ENCODE measurements at regions of chr17 and their contacts with region 1.

Region 1: DNA sequence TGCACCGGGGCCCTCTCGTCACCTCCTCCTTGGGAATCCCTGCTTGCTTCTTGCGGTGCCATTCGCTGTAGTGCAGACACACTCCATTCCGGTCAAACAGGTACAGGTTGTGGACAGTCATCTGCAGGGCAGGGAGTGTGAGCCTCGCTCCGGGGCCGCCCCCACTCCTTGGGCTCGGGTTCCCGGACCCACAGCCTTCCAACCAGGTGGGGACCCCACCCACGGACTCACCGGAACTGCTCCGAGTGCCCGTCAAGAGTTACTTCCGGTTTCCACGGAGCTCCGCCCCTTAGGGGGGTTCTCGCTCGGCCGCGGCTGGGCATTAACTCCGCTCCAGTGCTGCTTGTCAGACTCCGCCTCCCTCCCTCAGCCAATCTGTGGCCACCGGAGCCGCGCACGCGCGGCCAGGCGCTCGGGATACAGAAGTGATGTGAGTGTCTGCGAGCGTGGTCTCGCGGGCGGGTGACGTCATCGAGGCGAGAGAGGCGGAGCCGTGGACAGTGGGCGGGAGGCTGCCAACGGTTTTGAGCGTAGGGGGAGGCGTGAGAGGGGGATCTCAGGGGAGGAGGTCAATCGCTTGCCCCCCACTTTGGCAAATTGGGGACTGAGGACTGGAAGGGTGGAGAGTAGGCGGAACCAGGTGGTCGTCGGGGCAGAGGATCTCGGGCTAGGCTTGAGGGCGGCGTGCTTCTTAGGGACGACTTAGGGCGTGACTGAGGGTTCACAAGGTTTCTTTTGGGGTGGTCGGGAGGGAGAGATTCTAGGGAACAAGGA is at the starts of genes CNTROB and TRAPPC1:
- DNase-seq: peak; percentile 100
- H3K4me3 Mint-ChIP-seq: peak within 1 kb of the TSS; percentile 99
- H3K27ac Mint-ChIP-seq: peak within 1 kb of the TSS; percentile 99
- H3K4me1 Mint-ChIP-seq: peaks cover 42% of the 10 kb centered on the region
- H3K27me3 Mint-ChIP-seq: no peaks in the 10 kb centered on the region
- total RNA-seq, gene CNTROB: 53.5 and 54.7 TPM in 2 replicates
- total RNA-seq, gene TRAPPC1: 153 and 162 TPM in 2 replicates

Region 2: GRCh38 chr17:7834962-7835813 is 96.7 kb before region 1 on chr17:
- intact Hi-C with region 1: loop called (anchors 1 kb)
- DNase-seq: peak; percentile 75
- H3K4me3 Mint-ChIP-seq: peak overlapping the region; percentile 96
- H3K27ac Mint-ChIP-seq: peak overlapping the region; percentile 96
- H3K4me1 Mint-ChIP-seq: peaks cover 46% of the 10 kb centered on the region
- H3K27me3 Mint-ChIP-seq: peaks cover 17% of the 10 kb centered on the region

Region 3: DNA sequence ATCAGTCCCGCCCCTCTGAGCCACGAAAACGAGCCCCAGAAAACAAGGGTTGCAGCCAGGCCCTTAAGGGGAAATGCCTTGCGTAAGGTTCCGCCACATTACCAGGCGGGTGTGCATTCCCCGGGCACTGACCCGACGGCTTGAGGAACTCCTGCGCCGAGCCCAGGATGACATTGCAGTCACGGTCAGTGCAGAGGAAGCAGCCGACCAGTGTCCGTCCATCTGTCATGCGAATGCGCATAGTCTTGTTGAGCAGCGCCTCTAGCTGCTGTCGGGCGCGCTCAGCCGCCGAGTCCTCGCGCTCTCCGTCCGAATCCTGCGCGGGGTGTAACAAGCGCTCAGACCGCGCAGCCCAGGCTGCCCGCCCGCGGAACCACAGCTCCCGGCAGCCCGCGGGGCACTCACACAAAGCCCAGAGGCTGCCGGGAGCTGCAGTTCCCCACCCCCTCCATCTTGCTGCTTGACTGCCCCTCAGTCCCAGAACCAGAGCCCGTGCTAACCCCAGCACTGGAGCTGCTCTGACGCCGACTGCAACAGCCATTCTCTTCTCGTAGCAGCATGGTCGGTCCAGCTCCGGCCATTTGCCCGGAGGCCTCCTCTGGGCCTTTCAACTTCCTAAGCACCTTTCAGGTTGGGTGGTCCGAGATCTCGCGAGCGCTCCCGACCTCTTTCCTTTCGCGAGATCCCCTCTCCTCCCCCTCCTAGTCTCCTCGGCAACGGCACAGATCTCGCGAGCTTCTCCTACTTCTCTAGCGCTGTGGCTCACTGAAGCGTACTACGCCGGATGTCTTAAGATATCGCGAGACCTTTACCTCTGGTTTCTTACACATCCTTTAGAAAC is 74.8 kb before region 1 on chr17 and contains the start of gene NAA38:
- intact Hi-C with region 1: loop called (anchors 1 kb)
- DNase-seq: peak; percentile 92
- H3K4me3 Mint-ChIP-seq: no peak within 1 kb of the TSS
- H3K27ac Mint-ChIP-seq: no peak within 1 kb of the TSS
- H3K4me1 Mint-ChIP-seq: no peaks in the 10 kb centered on the region
- H3K27me3 Mint-ChIP-seq: no peaks in the 10 kb centered on the region
- total RNA-seq, gene NAA38: 36.4 and 43.5 TPM in 2 replicates

Region 4: DNA sequence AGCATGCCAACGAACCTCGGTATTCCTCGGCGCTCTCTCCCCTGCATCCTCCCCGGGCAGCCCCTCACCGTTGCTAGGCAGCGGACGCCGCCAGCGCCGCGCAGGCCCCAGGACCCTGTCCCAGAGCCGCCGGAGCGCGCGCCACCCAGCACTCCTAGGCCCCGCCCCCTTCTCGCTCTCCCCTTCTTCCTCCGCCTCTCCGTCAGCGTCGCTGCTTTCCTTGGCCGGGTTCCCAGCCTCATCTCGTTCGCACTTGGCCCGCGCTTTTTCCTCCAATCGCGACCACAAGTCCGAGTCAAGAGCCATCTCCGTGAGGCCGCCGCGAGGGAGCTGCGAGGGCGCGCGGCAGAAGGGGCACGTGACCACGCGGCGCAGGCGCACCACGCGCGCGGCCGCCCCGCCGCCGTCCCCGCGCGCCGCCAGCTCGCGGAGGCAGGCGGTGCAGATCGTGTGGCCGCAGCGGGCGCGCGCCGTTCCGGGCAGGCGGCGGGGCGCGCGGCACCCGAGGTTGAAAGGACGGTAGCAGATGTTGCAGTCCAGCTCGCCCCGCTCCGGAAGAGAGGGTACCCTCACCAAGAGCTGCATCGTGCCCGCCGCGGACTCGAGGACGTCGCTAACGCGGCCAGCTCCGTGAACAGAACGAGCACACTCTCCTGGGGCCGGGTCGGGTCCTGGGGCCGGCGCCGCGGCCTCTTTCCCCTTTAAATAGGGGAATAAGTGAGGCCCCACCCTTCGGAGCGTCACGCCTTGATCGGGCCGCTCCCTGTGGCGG is 16.1 kb before region 1 on chr17 and contains the start of gene RNF227:
- intact Hi-C with region 1: loop called (anchors 1 kb)
- DNase-seq: peak; percentile 77
- H3K4me3 Mint-ChIP-seq: peak within 1 kb of the TSS; percentile 92
- H3K27ac Mint-ChIP-seq: peak within 1 kb of the TSS; percentile 96
- H3K4me1 Mint-ChIP-seq: peaks cover 33% of the 10 kb centered on the region
- H3K27me3 Mint-ChIP-seq: no peaks in the 10 kb centered on the region
- total RNA-seq, gene RNF227: 6.2 and 6.3 TPM in 2 replicates

Region 5: GRCh38 chr17:7989781-7990655 is 58.1 kb after region 1 on chr17:
- intact Hi-C with region 1: loop called (anchors 1 kb)
- DNase-seq: peak; percentile 86
- H3K4me3 Mint-ChIP-seq: peak overlapping the region; percentile 76
- H3K27ac Mint-ChIP-seq: peak overlapping the region; percentile 67
- H3K4me1 Mint-ChIP-seq: peaks cover 21% of the 10 kb centered on the region
- H3K27me3 Mint-ChIP-seq: peaks cover 9% of the 10 kb centered on the region

Region 6: DNA sequence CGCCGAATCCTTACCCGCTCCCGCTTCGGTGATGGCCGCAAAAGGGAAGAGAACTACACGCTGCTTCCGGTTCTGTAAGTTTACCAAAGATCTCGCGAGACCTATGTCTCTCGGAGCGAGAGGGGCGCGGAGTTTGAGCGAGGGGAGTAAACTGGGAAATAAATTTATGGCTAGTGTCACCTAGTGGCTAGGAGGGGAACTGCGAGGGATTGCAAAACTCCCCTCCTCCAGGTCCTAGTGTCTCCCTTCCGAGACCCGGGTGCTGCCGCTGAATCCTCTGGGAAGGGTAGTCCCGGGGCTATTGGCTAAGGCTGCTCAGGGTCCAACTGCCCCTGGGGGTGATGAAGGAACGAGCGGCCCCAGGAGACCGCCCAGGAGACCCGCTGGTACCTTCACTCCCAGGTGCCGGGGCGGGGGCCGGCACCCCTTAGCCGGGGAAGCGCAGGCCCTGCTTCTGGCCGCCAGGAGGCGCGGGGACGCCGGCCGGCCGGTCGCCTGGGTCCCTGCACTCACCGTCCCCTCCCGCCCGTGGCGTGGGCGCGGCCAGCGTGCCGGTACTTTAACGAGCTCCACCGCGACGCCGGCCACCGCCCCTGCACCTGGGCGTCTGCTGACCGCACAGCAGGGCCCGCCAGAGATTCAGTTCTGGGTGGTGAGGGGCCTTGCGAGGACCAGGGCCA is 451.4 kb after region 1 on chr17 and contains the start of gene RPL26:
- intact Hi-C with region 1: loop called (anchors 2 kb)
- DNase-seq: peak; percentile 94
- H3K4me3 Mint-ChIP-seq: peak within 1 kb of the TSS; percentile 90
- H3K27ac Mint-ChIP-seq: peak within 1 kb of the TSS; percentile 87
- H3K4me1 Mint-ChIP-seq: peaks cover 42% of the 10 kb centered on the region
- H3K27me3 Mint-ChIP-seq: no peaks in the 10 kb centered on the region
- total RNA-seq, gene RPL26: 2,163 and 2,185 TPM in 2 replicates